BJ (cell line): ENCODE measurements at regions of chr3 and their contacts with region 1.

Region 1: GRCh38 chr3:49839193-49839809 is 17.1 kb downstream of the TRAIP start:
- DNase-seq: peak; percentile 16
- H3K4me3 ChIP-seq: no peak overlapping the region
- H3K27me3 ChIP-seq: no peaks in the 10 kb centered on the region
- CTCF ChIP-seq: peak; percentile 89

Region 2: DNA sequence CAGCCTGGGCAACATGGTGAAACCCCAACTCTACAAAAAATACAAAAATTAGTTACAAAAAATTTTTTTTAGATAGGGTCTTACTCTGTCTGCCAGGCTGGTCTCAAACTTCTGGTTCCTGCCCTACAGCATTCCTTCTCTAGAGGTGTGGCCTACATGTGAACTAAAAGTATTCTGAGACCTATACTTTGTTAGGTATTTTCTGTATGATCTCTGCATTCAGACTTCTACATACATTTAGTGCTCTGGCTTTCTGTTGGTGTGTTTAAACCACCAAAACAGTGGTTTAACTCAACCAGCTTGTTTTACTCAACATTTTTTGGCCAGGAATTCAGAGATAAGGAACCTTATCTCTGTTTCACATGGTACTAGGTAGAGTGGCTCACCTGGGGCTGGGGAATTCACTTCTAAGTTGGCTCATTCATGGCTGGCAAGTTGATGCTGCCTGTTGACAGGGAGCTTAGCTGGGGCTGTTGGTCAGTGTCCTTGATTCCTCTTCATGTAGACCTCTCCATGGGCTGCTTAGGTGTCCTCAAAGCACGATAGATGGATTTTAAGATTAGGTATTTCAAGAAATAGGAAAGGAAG is 326.4 kb before region 1 on chr3:
- CTCF ChIA-PET with region 1: no interaction called
- POLR2A ChIA-PET with region 1: no interaction called
- DNase-seq: no peak
- H3K4me3 ChIP-seq: no peak overlapping the region
- H3K27me3 ChIP-seq: no peaks in the 10 kb centered on the region
- CTCF ChIP-seq: no peak

Region 3: GRCh38 chr3:49703443-49703927 is 135.8 kb before region 1 on chr3:
- CTCF ChIA-PET with region 1: interaction called, 31 read pairs
- POLR2A ChIA-PET with region 1: no interaction called
- DNase-seq: no peak
- H3K4me3 ChIP-seq: no peak overlapping the region
- H3K27me3 ChIP-seq: no peaks in the 10 kb centered on the region
- CTCF ChIP-seq: peak; percentile 93

Region 4: GRCh38 chr3:49719214-49719884 is 120.0 kb before region 1 on chr3 and contains the start of gene AMIGO3:
- CTCF ChIA-PET with region 1: interaction called, 24 read pairs
- POLR2A ChIA-PET with region 1: no interaction called
- DNase-seq: peak; percentile 56
- H3K4me3 ChIP-seq: peak within 1 kb of the TSS; percentile 50
- H3K27me3 ChIP-seq: no peaks in the 10 kb centered on the region
- CTCF ChIP-seq: peak; percentile 65
- polyA plus RNA-seq, gene AMIGO3: not detected in 2 replicates

Region 5: DNA sequence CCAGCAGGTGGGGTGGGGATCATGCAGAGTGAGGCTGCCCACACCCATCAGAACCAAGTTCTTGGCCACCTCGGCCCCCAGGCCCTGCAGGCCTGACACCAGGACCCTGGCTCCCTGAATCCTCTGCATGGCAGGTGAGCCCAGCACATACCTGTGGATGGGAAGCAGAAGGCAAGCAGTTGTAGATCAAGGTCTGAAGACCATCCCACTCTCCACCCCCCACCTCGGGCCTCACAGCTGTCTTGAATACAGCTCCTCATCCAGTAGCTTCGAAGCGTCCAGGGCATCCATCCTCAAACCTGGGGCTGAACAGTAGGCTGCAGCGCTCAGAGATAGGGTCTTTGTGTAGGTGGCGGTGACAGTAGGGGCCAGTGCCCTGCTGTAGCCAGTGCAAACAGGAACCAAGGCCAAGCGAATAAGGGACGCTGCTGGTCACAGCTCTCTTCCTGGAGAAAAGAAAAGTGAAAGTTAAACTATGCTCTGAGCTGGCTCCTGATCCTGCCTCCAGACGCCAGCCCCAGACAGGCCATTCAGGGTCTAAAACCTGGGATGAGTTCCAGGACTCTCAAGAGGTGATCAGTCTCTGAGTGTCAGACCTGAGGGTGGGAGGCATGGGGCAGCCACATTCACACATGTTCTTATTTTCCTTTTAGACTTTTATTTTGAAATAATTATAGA is 25.7 kb before region 1 on chr3 and contains the start of gene UBA7:
- CTCF ChIA-PET with region 1: interaction called, 287 read pairs
- POLR2A ChIA-PET with region 1: interaction called, 5 read pairs
- DNase-seq: no peak
- H3K4me3 ChIP-seq: peak within 1 kb of the TSS; percentile 49
- H3K27me3 ChIP-seq: no peaks in the 10 kb centered on the region
- CTCF ChIP-seq: no peak
- polyA plus RNA-seq, gene UBA7: 32.9 and 62.5 TPM in 2 replicates

Region 6: GRCh38 chr3:49856181-49857005 is 17.1 kb after region 1 on chr3 and contains the start of gene TRAIP:
- CTCF ChIA-PET with region 1: interaction called, 11 read pairs
- POLR2A ChIA-PET with region 1: no interaction called
- DNase-seq: peak; percentile 64
- H3K4me3 ChIP-seq: peak within 1 kb of the TSS; percentile 74
- H3K27me3 ChIP-seq: no peaks in the 10 kb centered on the region
- CTCF ChIP-seq: no peak
- polyA plus RNA-seq, gene TRAIP: 4.9 and 5.8 TPM in 2 replicates

Region 7: GRCh38 chr3:49906004-49906743 is 66.9 kb after region 1 on chr3:
- CTCF ChIA-PET with region 1: interaction called, 14 read pairs
- POLR2A ChIA-PET with region 1: no interaction called
- DNase-seq: no peak
- H3K4me3 ChIP-seq: peak overlapping the region; percentile 19; the same call in 1 of the 2 replicates
- H3K27me3 ChIP-seq: no peaks in the 10 kb centered on the region
- CTCF ChIP-seq: peak; percentile 85